Panc1 (cell line): ENCODE measurements at regions of chr4 and their contacts with region 1.

Region 1: GRCh38 chr4:118224239-118224829 is 128.5 kb downstream of the PRSS12 start:
- DNase-seq: peak; percentile 28
- ATAC-seq: no peak
- H3K4me3 ChIP-seq: no peak overlapping the region
- H3K27ac ChIP-seq: no peak overlapping the region
- H3K4me1 ChIP-seq: no peaks in the 10 kb centered on the region
- H3K27me3 ChIP-seq: no peaks in the 10 kb centered on the region
- CTCF ChIP-seq: peak; percentile 61

Region 2: DNA sequence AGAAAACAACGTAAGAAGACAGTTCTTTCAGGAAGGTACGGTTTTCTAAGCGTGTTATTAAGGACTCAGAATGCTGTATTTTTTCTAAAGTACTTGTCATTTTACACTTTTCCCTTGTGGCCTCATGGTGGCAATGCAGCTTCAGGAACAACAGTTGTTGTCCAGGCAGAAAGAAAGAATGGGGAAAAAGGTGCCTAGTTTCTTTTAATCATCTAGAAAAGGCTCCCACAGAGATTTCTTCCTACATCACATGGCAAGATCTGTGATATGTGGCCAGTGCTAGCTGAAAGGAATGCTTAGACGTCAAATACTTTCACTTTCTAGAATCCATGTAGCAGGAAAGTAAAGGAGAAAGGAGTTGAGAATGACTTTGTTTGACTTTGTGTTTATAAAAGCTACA is 1089.9 kb before region 1 on chr4:
- CTCF ChIA-PET with region 1: no interaction called
- POLR2A ChIA-PET with region 1: no interaction called
- in situ Hi-C with region 1: no loop called
- intact Hi-C with region 1: loop called (anchors 5 kb)
- DNase-seq: peak; percentile 25
- ATAC-seq: no peak
- H3K4me3 ChIP-seq: no peak overlapping the region
- H3K27ac ChIP-seq: no peak overlapping the region
- H3K4me1 ChIP-seq: no peaks in the 10 kb centered on the region
- H3K27me3 ChIP-seq: no peaks in the 10 kb centered on the region
- CTCF ChIP-seq: peak; percentile 51; the same call in 1 of the 2 replicates

Region 3: GRCh38 chr4:118076958-118077766 is 147.2 kb before region 1 on chr4:
- CTCF ChIA-PET with region 1: no interaction called
- POLR2A ChIA-PET with region 1: no interaction called
- in situ Hi-C with region 1: no loop called
- intact Hi-C with region 1: loop called (anchors 10 kb)
- DNase-seq: no peak
- ATAC-seq: no peak
- H3K4me3 ChIP-seq: no peak overlapping the region
- H3K27ac ChIP-seq: no peak overlapping the region
- H3K4me1 ChIP-seq: no peaks in the 10 kb centered on the region
- H3K27me3 ChIP-seq: no peaks in the 10 kb centered on the region
- CTCF ChIP-seq: peak; percentile 47